ENCODE measurements at regions of chr4 and their contacts with region 1.

Region 1: GRCh38 chr4:106266201-106266600 is 49.8 kb downstream of the TBCK start:
- DNase-seq: peak; percentile 55
- ATAC-seq: peak; percentile 38; the same call in 1 of the 2 replicates
- H3K4me3 ChIP-seq: no peak overlapping the region
- H3K27ac ChIP-seq: no peak overlapping the region
- H3K4me1 ChIP-seq: no peaks in the 10 kb centered on the region
- H3K27me3 ChIP-seq: no peaks in the 10 kb centered on the region
- CTCF ChIP-seq: peak; percentile 80

Region 2: DNA sequence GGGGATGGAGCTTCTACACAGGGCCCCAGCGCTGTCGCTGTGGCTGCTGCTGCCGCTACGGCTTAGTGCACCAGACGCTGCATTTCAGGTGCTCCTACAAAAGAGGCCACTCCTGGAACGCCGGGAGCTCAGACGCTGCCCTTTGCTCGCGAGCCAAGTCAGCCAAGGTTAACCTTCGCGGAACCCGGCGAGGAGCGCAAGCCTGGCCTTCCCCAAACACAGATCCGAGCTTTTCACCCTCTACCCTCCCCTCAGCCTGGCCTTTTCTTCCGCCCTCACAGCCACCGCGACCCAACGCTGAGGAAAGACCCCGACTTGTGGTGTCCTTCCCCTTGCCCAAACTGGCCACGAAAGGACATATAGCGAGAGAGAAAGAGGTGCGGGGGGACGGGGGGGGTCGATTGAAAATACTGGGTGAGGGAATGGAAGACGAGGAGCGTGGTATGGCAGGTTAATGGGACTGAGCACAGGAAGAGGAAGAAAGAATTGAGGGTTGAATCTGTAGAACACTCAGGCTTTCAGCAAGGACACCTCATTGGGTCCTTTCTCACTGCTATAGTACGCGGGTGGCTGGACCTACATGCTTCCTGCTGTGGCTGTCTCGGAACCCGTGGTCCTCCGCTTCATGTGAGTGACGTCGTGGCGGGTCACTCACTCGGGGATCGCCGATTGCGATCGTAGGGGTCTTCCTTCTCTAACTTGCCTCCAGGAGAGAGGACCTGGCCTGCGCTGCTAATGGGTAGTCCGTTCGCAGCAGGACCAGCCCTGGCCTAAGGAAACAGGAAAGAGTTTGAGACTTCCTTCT is 50.0 kb after region 1 on chr4 and contains the starts of genes AIMP1 and TBCK:
- CTCF ChIA-PET with region 1: no interaction called
- POLR2A ChIA-PET with region 1: interaction called, 3 read pairs
- intact Hi-C with region 1: loop called (anchors 5 kb)
- DNase-seq: peak; percentile 78
- ATAC-seq: peak; percentile 82
- H3K4me3 ChIP-seq: peak within 1 kb of the TSS; percentile 86
- H3K27ac ChIP-seq: peak within 1 kb of the TSS; percentile 92
- H3K4me1 ChIP-seq: peaks cover 28% of the 10 kb centered on the region
- H3K27me3 ChIP-seq: no peaks in the 10 kb centered on the region
- CTCF ChIP-seq: no peak
- total RNA-seq, gene AIMP1: 15.3 and 15.9 TPM in 2 replicates
- total RNA-seq, gene TBCK: 7.6 and 10.1 TPM in 2 replicates

Region 3: DNA sequence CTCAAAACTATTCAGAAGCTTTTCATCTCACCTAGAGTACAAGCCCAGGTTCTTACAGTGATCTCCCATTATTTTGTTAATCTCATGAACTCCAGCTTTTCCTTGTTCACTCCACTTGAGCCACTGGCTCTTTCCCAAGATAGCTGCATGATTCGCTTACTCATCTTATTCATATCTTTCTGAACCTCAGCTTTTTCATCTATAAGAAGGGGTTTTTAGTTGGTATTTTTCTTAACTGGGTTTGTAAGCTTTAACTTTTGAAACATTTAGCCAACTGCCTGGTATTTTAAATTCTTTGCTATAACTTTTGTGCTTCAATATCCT is 78.4 kb after region 1 on chr4:
- CTCF ChIA-PET with region 1: no interaction called
- POLR2A ChIA-PET with region 1: no interaction called
- intact Hi-C with region 1: no loop called
- DNase-seq: no peak
- ATAC-seq: no peak
- H3K4me3 ChIP-seq: no peak overlapping the region
- H3K27ac ChIP-seq: no peak overlapping the region
- H3K4me1 ChIP-seq: no peaks in the 10 kb centered on the region
- H3K27me3 ChIP-seq: no peaks in the 10 kb centered on the region
- CTCF ChIP-seq: no peak

Region 4: DNA sequence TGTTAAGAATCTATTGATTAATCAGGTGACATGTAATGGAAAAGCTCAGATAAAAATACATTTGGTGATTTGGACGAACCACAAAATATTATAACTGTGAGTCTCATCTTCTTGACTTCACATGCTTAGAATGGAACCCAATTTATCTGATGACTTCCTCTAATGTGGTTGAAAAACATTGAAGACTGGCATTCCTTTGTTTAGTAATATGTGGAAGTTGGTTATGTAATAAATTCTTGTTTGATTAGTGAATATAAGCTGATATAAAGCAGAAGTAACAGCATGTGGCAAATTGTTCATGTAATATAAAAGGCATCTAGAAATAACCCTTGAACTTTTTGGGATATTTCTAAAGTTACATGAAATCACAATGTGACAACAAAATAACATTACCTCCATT is 92.7 kb after region 1 on chr4:
- CTCF ChIA-PET with region 1: no interaction called
- POLR2A ChIA-PET with region 1: no interaction called
- intact Hi-C with region 1: no loop called
- DNase-seq: peak; percentile 13
- ATAC-seq: no peak
- H3K4me3 ChIP-seq: no peak overlapping the region
- H3K27ac ChIP-seq: no peak overlapping the region
- H3K4me1 ChIP-seq: no peaks in the 10 kb centered on the region
- H3K27me3 ChIP-seq: no peaks in the 10 kb centered on the region
- CTCF ChIP-seq: no peak

Region 5: GRCh38 chr4:106502106-106502699 is 236.0 kb after region 1 on chr4:
- CTCF ChIA-PET with region 1: no interaction called
- POLR2A ChIA-PET with region 1: no interaction called
- intact Hi-C with region 1: loop called (anchors 2 kb)
- DNase-seq: peak; percentile 77
- ATAC-seq: peak; percentile 74
- H3K4me3 ChIP-seq: no peak overlapping the region
- H3K27ac ChIP-seq: no peak overlapping the region
- H3K4me1 ChIP-seq: no peaks in the 10 kb centered on the region
- H3K27me3 ChIP-seq: no peaks in the 10 kb centered on the region
- CTCF ChIP-seq: peak; percentile 80

Region 6: GRCh38 chr4:106898621-106899230 is 632.5 kb after region 1 on chr4:
- CTCF ChIA-PET with region 1: no interaction called
- POLR2A ChIA-PET with region 1: no interaction called
- intact Hi-C with region 1: loop called (anchors 2 kb)
- DNase-seq: peak; percentile 68
- ATAC-seq: peak; percentile 81
- H3K4me3 ChIP-seq: no peak overlapping the region
- H3K27ac ChIP-seq: no peak overlapping the region
- H3K4me1 ChIP-seq: no peaks in the 10 kb centered on the region
- H3K27me3 ChIP-seq: no peaks in the 10 kb centered on the region
- CTCF ChIP-seq: peak; percentile 81

Measured in PC-3 (cell line).